Calu3 (cell line): ENCODE measurements at regions of chr1 and their contacts with region 1.

Region 1: DNA sequence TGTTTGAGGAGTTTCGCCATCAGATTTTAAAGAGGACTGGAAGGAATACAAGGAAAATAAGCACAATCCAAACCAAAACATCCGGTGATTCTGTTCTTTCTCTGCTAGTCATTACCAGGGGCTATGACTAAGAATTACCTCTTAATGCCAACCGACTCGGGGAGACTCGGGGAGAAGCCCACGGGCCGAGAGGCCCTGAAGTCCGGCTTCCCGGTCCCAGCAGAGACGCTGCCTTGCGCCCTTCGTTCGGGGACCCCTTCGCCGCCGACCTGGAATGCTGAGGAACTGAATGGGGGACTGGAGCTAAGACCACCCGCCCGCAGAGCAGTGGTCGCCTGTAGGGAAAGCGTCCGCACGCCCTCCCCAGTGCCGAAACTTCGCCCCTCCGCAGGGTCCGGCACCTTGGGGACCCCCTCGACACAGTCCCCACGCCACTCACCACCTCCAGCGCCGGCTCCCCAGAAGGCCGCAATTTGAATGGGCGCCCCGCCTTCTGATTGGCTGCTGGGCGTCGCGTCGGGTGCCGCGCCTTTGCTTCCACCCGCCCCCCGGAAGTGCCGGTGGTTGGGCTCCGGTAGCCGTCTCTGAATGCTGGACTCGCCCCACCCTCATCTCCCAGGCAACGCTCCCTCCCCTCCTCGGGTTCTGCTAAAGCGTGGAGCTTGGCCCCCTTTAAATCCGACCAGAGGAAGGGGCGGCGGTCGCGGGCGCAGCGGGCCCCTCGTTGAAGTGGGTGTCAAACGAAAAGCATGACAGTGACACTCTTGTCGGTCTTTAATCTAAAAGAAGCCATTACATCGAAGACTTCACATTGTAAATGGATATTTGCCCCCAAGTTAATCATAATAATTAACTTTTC is at the start of gene KIF14:
- DNase-seq: peak; percentile 98
- H3K4me3 Mint-ChIP-seq: peak within 1 kb of the TSS; percentile 97
- H3K27ac Mint-ChIP-seq: peak within 1 kb of the TSS; percentile 97
- H3K4me1 Mint-ChIP-seq: peaks cover 18% of the 10 kb centered on the region
- H3K27me3 Mint-ChIP-seq: no peaks in the 10 kb centered on the region
- CTCF ChIP-seq: no peak
- total RNA-seq, gene KIF14: 17.2 and 20.7 TPM in 2 replicates

Region 2: DNA sequence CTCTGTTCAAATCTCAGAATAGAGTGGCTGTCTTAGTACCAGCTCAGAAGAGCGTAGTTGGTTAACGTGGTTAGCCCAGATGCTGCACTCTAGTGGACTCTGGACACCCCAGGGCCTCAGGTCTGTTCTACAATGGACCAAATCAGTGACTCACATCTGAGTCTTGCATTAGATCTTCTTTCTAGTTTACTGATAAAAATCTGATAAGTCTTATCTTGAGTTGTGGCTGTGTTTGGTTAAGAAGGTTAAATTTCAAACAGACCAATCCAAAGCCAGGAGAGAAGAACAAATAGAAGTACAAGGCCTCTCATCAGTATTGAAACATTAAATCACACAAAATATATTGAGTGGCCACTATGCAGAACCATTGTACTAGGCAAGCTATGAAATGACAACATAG is 488.9 kb before region 1 on chr1:
- CTCF ChIA-PET with region 1: no interaction called
- intact Hi-C with region 1: no loop called
- DNase-seq: peak; percentile 59
- H3K4me3 Mint-ChIP-seq: no peak overlapping the region
- H3K27ac Mint-ChIP-seq: no peak overlapping the region
- H3K4me1 Mint-ChIP-seq: peaks cover 54% of the 10 kb centered on the region
- H3K27me3 Mint-ChIP-seq: no peaks in the 10 kb centered on the region
- CTCF ChIP-seq: no peak

Region 3: GRCh38 chr1:200669314-200670241 is 49.1 kb after region 1 on chr1 and contains the start of gene DDX59:
- CTCF ChIA-PET with region 1: interaction called, 24 read pairs
- intact Hi-C with region 1: loop called (anchors 5 kb)
- DNase-seq: peak; percentile 98
- H3K4me3 Mint-ChIP-seq: peak within 1 kb of the TSS; percentile 95
- H3K27ac Mint-ChIP-seq: peak within 1 kb of the TSS; percentile 97
- H3K4me1 Mint-ChIP-seq: peaks cover 22% of the 10 kb centered on the region
- H3K27me3 Mint-ChIP-seq: no peaks in the 10 kb centered on the region
- CTCF ChIP-seq: no peak
- total RNA-seq, gene DDX59: 15.1 and 19.3 TPM in 2 replicates

Region 4: GRCh38 chr1:200802865-200803512 is 182.5 kb after region 1 on chr1:
- CTCF ChIA-PET with region 1: interaction called, 16 read pairs
- intact Hi-C with region 1: loop called (anchors 1 kb)
- DNase-seq: peak; percentile 86
- H3K4me3 Mint-ChIP-seq: no peak overlapping the region
- H3K27ac Mint-ChIP-seq: no peak overlapping the region
- H3K4me1 Mint-ChIP-seq: peaks cover 8% of the 10 kb centered on the region
- H3K27me3 Mint-ChIP-seq: no peaks in the 10 kb centered on the region
- CTCF ChIP-seq: peak; percentile 97

Region 5: DNA sequence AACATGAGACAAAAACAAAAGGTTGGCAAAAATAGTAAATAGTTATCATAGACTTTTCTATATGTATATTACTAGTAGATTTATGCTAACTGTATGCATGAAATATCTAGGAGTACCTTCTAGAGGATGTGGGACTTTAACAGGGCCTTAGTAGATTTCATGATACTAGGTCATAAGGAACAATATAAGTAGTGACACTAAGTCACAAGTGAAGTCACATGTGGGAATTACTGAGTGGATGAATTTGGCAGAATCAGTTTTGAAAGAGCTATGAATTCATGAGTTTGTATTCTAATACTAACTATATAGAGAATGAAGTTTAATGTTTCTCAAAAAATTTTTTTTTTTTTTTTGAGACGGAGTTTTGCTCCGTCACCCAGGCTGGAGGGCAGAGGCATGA is 199.2 kb after region 1 on chr1:
- CTCF ChIA-PET with region 1: no interaction called
- intact Hi-C with region 1: no loop called
- DNase-seq: no peak
- H3K4me3 Mint-ChIP-seq: no peak overlapping the region
- H3K27ac Mint-ChIP-seq: no peak overlapping the region
- H3K4me1 Mint-ChIP-seq: no peaks in the 10 kb centered on the region
- H3K27me3 Mint-ChIP-seq: no peaks in the 10 kb centered on the region
- CTCF ChIP-seq: no peak

Region 6: GRCh38 chr1:200925831-200926230 is 305.3 kb after region 1 on chr1:
- CTCF ChIA-PET with region 1: no interaction called
- intact Hi-C with region 1: no loop called
- DNase-seq: no peak
- H3K4me3 Mint-ChIP-seq: no peak overlapping the region
- H3K27ac Mint-ChIP-seq: no peak overlapping the region
- H3K4me1 Mint-ChIP-seq: no peaks in the 10 kb centered on the region
- H3K27me3 Mint-ChIP-seq: no peaks in the 10 kb centered on the region
- CTCF ChIP-seq: no peak

Region 7: DNA sequence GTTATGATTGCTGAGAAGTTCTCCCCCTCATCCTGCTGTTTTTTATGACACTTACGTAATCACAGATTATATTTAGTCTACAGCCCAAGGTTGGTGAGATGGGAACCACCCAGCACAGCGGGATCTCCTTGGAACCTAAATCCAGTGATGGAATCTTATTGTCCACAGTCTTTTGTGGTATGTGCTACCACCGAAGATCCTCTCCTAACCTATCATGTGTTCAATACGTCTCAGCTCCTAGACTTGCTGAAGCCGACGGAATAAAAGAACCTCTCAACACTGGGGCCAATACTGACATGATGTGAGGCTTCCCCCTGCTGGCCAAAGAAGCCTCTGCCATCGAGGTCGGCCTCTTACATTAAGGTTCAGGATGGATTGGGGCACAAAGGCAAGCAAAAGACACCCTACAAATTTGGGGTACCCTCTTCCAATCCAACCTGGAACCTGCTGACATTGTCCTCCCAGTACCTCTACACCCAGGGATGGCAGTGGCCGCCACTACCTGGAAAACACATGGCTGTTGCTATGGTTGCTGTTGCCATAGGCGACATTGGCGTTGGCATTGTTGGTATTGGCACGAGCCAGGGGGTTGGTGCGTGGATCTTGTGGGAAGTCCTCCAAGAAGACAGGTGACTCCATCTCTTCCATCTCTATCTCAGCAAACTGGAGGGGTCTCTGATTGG is 422.4 kb after region 1 on chr1:
- CTCF ChIA-PET with region 1: interaction called, 6 read pairs
- intact Hi-C with region 1: loop called (anchors 5 kb)
- DNase-seq: peak; percentile 75
- H3K4me3 Mint-ChIP-seq: no peak overlapping the region
- H3K27ac Mint-ChIP-seq: no peak overlapping the region
- H3K4me1 Mint-ChIP-seq: no peaks in the 10 kb centered on the region
- H3K27me3 Mint-ChIP-seq: peaks cover 38% of the 10 kb centered on the region
- CTCF ChIP-seq: peak; percentile 90

Region 8: DNA sequence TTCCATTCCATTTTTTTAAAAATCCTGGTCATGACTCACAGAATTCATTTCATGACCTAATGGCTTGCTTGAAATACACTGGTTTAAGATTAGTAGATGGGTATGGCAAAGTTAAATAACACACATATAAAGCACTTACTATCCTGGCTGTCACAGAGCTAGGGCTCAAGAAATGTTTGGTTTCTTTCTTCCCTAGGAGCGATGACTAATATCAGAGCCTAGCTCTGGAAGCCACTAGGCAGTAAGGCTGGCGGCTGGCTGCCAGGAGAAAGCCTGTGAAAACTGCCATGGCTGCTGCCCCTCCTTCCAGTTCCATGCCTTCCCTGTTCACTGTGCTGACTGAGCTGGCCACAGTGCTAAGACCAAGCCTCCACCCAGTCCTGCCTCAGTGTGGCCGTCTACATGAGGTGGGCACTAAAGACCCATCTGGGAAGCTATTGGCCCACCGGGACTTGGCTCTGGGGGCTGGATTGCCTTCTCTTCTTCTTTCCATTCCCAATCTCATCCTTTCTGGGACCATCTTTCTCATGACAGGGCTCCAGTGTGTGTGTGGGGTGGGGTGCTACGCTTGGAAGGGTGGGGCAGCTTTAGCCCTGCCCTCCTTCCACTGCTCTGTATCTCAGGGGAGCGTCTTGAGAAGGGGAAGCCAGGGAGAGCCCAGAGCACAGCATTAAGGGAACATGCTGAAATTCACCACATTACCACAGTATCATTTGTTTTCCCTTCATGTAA is 517.2 kb after region 1 on chr1:
- CTCF ChIA-PET with region 1: no interaction called
- intact Hi-C with region 1: no loop called
- DNase-seq: no peak
- H3K4me3 Mint-ChIP-seq: no peak overlapping the region
- H3K27ac Mint-ChIP-seq: no peak overlapping the region
- H3K4me1 Mint-ChIP-seq: no peaks in the 10 kb centered on the region
- H3K27me3 Mint-ChIP-seq: no peaks in the 10 kb centered on the region
- CTCF ChIP-seq: no peak